Endothelial cell of umbilical vein (primary cell): ENCODE measurements at regions of chr7 and their contacts with region 1.

Region 1: DNA sequence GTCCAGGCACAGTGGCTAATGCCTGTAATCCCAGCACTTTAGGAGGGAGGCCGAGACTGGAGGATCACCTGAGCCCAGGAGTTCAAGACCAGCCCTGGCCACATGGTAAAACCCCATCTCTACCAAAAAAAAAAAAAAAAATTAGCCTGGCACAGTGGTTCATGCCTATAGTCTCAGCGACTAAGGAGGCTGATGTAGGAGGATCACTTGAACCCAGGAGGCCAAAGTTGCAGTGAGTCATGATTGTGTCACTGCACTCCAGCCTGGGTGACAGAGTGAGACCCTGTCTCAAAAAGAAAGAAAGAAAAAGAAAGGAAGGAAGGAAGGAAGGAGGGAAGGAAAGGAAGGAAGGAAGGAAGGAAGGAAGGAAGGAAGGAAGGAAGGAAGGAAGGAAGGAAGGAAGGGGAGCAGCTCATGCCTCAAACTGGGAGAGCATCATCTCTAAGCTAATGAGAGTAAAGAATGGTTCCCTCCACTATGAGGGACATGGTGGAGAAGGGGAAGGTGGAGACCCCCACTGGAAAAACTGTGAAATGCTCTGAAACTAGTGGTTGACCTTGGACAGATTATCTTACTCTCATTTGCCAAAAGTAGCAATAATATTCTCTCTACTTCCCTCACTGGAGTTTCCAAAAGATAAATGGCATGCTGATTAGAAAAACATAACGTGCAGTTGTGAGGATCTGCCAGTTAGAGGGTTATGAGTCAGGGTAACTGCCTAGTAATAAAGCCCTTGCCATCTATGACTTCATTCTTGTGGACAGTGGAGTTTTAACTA is 16.8 kb downstream of the GIMAP5 start:
- DNase-seq: peak; percentile 95
- H3K4me3 ChIP-seq: no peak overlapping the region
- H3K27ac ChIP-seq: peak overlapping the region; percentile 2
- H3K4me1 ChIP-seq: peaks cover 22% of the 10 kb centered on the region
- H3K27me3 ChIP-seq: no peaks in the 10 kb centered on the region
- CTCF ChIP-seq: peak; percentile 21 to 55
- POLR2A ChIP-seq: no peak

Region 2: DNA sequence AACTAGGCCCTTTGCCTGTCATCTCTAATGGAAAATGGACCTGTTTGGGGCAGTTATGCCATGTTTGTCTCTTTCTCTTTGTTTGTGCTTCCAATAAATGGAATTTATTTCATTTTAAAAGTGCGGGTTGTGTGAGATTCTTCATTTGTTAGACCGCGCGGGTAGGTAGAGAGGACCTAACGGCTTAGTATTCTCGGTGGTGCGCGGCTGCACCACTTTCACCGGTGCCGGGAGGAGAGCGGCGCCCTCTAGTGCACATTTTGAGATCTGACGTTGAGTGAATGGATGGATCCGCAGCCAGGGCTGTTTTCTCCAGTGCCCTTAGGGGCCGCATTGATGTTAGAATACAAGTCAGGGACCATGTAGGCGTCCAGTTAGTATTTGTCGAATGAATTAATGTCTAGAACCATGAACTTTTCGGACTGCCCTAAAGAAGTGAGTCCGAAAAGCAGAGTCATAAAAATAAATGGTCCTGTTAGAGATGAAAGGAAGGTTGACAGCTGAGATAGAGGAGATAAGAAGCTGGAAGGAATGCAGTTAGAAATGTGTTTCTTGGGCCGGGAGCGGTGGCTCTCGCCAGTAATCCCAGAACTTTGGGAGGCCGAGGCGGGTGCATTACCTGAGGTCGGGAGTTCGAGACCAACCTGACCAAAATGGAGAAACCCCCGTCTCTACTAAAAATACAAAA is 332.9 kb before region 1 on chr7:
- CTCF ChIA-PET with region 1: interaction called, 3 read pairs
- POLR2A ChIA-PET with region 1: no interaction called
- dilution Hi-C with region 1: no loop called
- intact Hi-C with region 1: loop called (anchors 1 kb)
- DNase-seq: peak; percentile 80
- H3K4me3 ChIP-seq: no peak overlapping the region
- H3K27ac ChIP-seq: no peak overlapping the region
- H3K4me1 ChIP-seq: no peaks in the 10 kb centered on the region
- H3K27me3 ChIP-seq: no peaks in the 10 kb centered on the region
- CTCF ChIP-seq: peak; percentile 80 to 81
- POLR2A ChIP-seq: no peak

Region 3: DNA sequence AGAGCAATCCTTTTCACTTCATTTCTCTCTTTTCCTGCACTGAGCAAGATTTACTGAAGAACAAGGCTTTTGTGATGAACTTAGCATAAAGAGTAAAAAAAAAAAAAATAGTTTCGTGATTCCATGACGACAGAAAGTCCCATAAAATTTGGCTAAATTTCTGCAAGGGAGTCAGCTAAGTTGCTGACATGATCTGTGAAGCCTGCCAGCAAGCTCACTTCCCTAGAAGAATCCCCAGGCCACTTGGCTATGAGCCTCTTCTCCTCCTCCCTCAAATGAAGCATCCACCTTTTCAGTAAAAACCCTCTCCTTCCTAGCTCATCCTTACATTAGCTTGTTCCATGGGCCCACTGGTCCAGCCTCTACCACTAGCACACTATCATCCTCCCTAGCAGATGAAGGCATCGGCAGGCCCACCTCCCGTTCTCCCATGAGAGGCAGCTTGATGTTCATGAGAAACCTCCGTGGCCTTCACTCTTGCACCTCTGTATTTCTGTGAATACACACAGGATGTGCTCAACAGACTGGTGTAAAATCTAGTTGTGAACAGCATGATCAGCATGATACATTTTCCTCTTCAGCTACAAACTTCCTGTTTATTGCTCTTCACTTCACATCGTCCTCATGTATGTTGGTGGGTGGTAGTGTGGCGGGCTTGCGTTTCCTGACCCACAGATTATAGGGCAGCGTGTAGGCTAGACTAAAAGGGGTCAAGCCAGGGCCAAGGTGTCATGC is 272.7 kb before region 1 on chr7:
- CTCF ChIA-PET with region 1: interaction called, 3 read pairs
- POLR2A ChIA-PET with region 1: no interaction called
- dilution Hi-C with region 1: no loop called
- intact Hi-C with region 1: loop called (anchors 1 kb)
- DNase-seq: no peak
- H3K4me3 ChIP-seq: no peak overlapping the region
- H3K27ac ChIP-seq: no peak overlapping the region
- H3K4me1 ChIP-seq: peaks cover 15% of the 10 kb centered on the region
- H3K27me3 ChIP-seq: no peaks in the 10 kb centered on the region
- CTCF ChIP-seq: no peak
- POLR2A ChIP-seq: no peak

Region 4: GRCh38 chr7:150567169-150567568 is 186.8 kb before region 1 on chr7 and contains the start of gene GIMAP4:
- CTCF ChIA-PET with region 1: interaction called, 8 read pairs
- POLR2A ChIA-PET with region 1: interaction called, 3 read pairs
- dilution Hi-C with region 1: no loop called
- intact Hi-C with region 1: loop called (anchors 1 kb)
- DNase-seq: peak; percentile 69
- H3K4me3 ChIP-seq: peak within 1 kb of the TSS; percentile 78 to 80 (median 79)
- H3K27ac ChIP-seq: peak within 1 kb of the TSS; percentile 63
- H3K4me1 ChIP-seq: peaks cover 62% of the 10 kb centered on the region
- H3K27me3 ChIP-seq: no peaks in the 10 kb centered on the region
- CTCF ChIP-seq: no peak
- POLR2A ChIP-seq: peak; percentile 49
- total RNA-seq, gene GIMAP4: 168 and 174 TPM in 2 replicates

Region 5: DNA sequence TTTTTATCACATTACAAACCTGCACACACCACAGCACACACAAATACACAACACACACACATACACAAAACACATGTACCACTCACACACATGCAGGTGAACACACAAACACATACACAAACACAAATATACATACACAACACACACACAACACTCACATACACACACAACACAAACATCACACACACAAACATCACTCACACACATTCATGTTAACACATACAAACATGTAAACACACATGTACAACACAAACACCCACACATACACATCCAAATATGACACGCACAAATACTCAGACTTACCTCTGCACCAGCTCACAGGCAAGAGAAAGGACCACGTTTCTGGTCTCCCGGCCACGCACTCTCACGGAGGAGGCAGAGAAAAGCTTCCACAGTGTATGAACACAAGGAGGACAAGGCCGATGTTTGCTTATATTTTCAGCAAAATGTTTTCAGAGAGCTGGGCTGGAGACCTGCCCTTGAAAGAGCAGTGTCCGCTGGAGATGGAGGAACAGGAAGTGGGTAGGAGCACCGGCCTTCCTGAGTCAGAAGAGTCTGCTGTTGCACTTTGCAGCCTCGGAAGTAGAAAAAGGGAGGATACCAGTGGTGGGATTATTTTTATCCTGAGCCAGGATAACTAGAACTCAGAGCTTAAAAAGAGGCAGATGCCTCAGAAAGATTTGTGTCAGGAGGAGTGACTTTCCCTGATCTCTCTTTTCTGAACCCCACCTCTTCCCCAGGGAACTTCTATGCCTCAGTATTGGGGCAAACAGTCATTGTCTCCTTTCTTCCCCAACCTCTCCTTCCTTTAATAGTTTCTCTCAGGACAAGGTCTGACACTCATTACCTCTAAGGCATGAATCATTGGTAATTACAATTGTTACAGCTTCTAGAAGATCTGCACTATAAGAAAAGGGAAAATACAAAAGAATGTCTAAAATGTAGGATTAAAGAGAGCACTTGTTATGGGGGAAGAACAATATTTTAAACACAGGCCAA is 121.8 kb before region 1 on chr7 and contains the start of gene GIMAP6:
- CTCF ChIA-PET with region 1: no interaction called
- POLR2A ChIA-PET with region 1: interaction called, 3 read pairs
- dilution Hi-C with region 1: no loop called
- intact Hi-C with region 1: loop called (anchors 1 kb)
- DNase-seq: peak; percentile 74
- H3K4me3 ChIP-seq: peak within 1 kb of the TSS; percentile 7 to 80 (median 49)
- H3K27ac ChIP-seq: peak within 1 kb of the TSS; percentile 43
- H3K4me1 ChIP-seq: peaks cover 35% of the 10 kb centered on the region
- H3K27me3 ChIP-seq: no peaks in the 10 kb centered on the region
- CTCF ChIP-seq: no peak
- POLR2A ChIP-seq: peak; percentile 69
- total RNA-seq, gene GIMAP6: 85.0 and 87.8 TPM in 2 replicates

Region 6: GRCh38 chr7:150716368-150716767 is 37.6 kb before region 1 on chr7 and contains the start of gene GIMAP1:
- CTCF ChIA-PET with region 1: interaction called, 15 read pairs
- POLR2A ChIA-PET with region 1: interaction called, 3 read pairs
- dilution Hi-C with region 1: no loop called
- intact Hi-C with region 1: no loop called
- DNase-seq: peak; percentile 88
- H3K4me3 ChIP-seq: peak within 1 kb of the TSS; percentile 61 to 84 (median 78)
- H3K27ac ChIP-seq: peak within 1 kb of the TSS; percentile 39
- H3K4me1 ChIP-seq: peaks cover 18% of the 10 kb centered on the region
- H3K27me3 ChIP-seq: no peaks in the 10 kb centered on the region
- CTCF ChIP-seq: no peak
- POLR2A ChIP-seq: peak; percentile 97
- total RNA-seq, gene GIMAP1: 11.8 and 11.9 TPM in 2 replicates